Aorta (tissue), 5 donors: ENCODE measurements at regions of chr18 and their contacts with region 1.

Region 1: GRCh38 chr18:41113885-41114482 is 841.0 kb upstream of the PIK3C3 start:
- DNase-seq: no peak
- ATAC-seq: no peak
- H3K4me3 ChIP-seq: no peak overlapping the region
- H3K27ac ChIP-seq: no peak overlapping the region
- H3K4me1 ChIP-seq: no peaks in the 10 kb centered on the region
- H3K27me3 ChIP-seq: no peaks in the 10 kb centered on the region

Region 2: DNA sequence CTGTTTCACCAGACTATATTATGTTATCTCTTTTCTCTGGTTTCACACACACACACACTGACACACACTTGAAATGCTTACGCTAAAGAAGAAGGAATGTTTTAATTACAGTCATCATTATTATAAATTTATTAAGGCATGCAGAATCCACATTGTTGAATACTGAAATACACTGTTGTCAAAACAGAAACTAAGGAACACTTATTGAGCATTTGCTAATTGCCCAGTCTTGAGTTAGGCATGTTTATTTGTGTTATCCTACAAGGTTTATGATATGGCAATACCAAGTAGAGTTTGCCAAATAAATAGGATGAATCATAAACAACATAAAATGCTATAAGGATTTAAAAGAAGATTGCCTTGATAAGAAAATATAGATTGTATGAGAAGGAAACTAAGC is 75.9 kb before region 1 on chr18:
- intact Hi-C with region 1: no loop called
- DNase-seq: no peak
- ATAC-seq: no peak
- H3K4me3 ChIP-seq: no peak overlapping the region
- H3K27ac ChIP-seq: no peak overlapping the region
- H3K4me1 ChIP-seq: no peaks in the 10 kb centered on the region
- H3K27me3 ChIP-seq: no peaks in the 10 kb centered on the region

Region 3: DNA sequence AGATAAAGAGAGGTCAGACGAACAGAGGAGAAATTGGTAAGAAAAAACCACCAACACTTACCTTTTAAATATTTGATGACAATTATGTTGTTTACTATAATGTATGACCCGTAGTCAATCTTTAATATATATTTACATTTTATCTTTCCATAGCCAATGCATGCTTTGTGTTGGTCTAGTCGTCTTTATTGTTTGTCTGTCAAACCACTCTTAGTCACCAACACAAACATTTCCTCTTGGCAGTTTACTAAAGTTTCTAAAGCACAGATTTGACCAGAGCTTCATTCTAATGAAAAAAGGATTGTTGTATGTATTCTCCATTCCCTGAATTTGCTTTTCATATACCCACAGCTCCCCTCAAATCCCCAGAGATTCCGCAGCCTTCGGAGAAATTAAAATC is 56.4 kb after region 1 on chr18:
- intact Hi-C with region 1: loop called in 1 of 2 experiments (anchors 10 kb)
- DNase-seq: no peak
- ATAC-seq: no peak
- H3K4me3 ChIP-seq: no peak overlapping the region
- H3K27ac ChIP-seq: no peak overlapping the region
- H3K4me1 ChIP-seq: no peaks in the 10 kb centered on the region
- H3K27me3 ChIP-seq: no peaks in the 10 kb centered on the region